ENCODE measurements at regions of chr14 and their contacts with region 1.

Region 1: DNA sequence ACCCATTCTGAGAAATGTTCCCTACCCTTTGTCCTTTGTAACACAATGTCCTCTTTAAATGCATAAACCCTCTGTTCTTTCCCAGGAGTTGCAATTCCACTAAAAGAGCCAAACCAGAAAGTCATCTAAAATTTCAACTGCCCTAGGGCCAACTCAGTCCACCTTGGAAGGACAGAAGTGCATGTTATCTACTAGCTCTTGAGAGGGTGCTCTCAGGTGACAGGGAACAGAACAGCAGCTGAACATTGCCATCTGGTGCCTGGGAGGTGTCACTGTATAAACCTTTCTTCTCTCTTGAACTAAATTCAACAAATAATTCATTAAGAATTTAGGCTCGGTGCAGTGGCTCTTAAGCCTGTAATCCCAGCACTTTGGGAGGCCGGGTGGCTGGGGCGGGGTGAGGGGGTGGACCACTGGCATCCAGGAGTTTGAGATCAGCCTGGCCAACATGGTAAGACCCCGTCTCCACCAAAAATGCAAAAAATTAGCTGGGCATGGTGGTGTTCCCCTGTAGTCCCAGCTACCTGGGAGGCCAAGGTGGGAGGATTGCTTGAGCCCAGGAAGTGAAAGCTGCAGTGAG is 10.3 kb upstream of the FERMT2 start:
- DNase-seq: no peak

Region 2: DNA sequence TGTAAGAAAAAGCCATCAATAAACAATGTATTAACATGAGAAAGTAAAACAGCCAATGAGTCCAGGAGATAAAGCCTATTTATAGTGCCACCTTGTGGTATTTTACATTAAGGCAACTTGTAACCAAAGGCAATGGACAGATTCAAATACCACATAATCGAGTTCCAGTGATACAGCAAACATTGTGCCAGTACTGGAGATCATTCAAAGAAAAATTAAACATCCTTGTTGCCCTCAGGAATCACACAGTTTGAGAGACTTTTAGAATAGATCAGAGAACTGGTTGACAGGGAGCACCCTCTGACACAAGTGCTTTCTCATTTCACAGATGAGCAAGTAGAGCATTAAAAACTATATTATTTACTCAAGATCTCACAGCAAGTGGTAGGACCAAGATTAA is 93.9 kb after region 1 on chr14:
- intact Hi-C with region 1: loop called in 1 of 2 experiments (anchors 10 kb)
- DNase-seq: no peak

Measured in posterior vena cava (tissue), 2 donors.